ENCODE measurements at regions of chr15 and their contacts with region 1.

Region 1: GRCh38 chr15:40928821-40929659 is at the start of gene DLL4:
- DNase-seq: peak; percentile 24
- H3K4me3 ChIP-seq: peak within 1 kb of the TSS; percentile 63
- H3K27ac ChIP-seq: no peak within 1 kb of the TSS
- H3K27me3 ChIP-seq: peaks cover 42% of the 10 kb centered on the region
- CTCF ChIP-seq: no peak
- polyA plus RNA-seq, gene DLL4: 1.5 and 2.6 TPM in 2 replicates

Region 2: GRCh38 chr15:40906091-40906990 is 22.7 kb before region 1 on chr15:
- CTCF ChIA-PET with region 1: interaction called, 10 read pairs
- POLR2A ChIA-PET with region 1: interaction called, 4 read pairs
- DNase-seq: peak; percentile 86
- H3K4me3 ChIP-seq: peak overlapping the region; percentile 48
- H3K27ac ChIP-seq: peak overlapping the region; percentile 94
- H3K27me3 ChIP-seq: no peaks in the 10 kb centered on the region
- CTCF ChIP-seq: peak; percentile 80

Region 3: GRCh38 chr15:40974879-40975278 is 45.8 kb after region 1 on chr15:
- CTCF ChIA-PET with region 1: no interaction called
- POLR2A ChIA-PET with region 1: no interaction called
- DNase-seq: no peak
- H3K4me3 ChIP-seq: no peak overlapping the region
- H3K27ac ChIP-seq: no peak overlapping the region
- H3K27me3 ChIP-seq: no peaks in the 10 kb centered on the region
- CTCF ChIP-seq: no peak

Measured in AG04450 (cell line).